Keratinocyte (primary cell): ENCODE measurements at regions of chr15 and their contacts with region 1.

Region 1: DNA sequence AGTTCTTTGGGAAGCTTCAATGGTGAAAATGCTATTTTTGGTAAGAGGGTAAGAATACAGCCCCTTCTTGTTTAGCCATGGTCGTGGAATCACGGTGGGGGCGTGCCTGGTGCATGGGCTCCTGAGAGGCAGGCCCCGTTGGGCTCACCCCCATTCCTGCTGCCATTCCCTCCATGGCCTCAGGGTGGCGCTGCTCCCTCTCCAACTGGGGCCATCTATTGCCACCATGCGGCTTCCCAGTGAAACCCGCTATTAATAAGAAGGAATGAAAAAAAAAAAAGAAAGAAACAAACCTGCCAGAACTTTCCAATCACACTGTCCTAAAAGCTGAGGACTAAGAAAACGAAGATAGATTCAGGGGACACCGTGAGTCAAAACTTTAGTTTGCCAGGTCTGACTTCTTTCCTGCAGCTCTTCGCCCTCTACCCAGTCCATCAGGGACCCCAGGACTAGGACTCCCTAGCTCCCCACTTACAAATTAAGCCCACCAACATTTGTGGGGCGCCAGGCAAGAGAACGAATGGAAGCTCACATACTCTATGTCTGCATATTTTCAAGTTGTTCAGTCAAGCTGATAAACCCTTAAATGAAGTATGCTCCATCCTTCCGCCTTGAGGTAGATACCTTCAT is 30.6 kb upstream of the ABHD2 start:
- DNase-seq: no peak
- H3K4me3 ChIP-seq: no peak overlapping the region
- H3K27ac ChIP-seq: no peak overlapping the region
- H3K4me1 ChIP-seq: no peaks in the 10 kb centered on the region
- H3K27me3 ChIP-seq: peaks cover 7% of the 10 kb centered on the region
- CTCF ChIP-seq: peak; percentile 97 to 98 (median 97)

Region 2: GRCh38 chr15:89197503-89197971 is 139.9 kb after region 1 on chr15:
- dilution Hi-C with region 1: loop called (anchors 10 kb)
- DNase-seq: no peak
- H3K4me3 ChIP-seq: peak overlapping the region in 1 of 3 experiments; percentile 40
- H3K27ac ChIP-seq: peak overlapping the region; percentile 57
- H3K4me1 ChIP-seq: peaks cover 14% of the 10 kb centered on the region
- H3K27me3 ChIP-seq: no peaks in the 10 kb centered on the region
- CTCF ChIP-seq: no peak